Right ventricle myocardium superior (tissue), 1 donor: ENCODE measurements at regions of chr14 and their contacts with region 1.

Region 1: DNA sequence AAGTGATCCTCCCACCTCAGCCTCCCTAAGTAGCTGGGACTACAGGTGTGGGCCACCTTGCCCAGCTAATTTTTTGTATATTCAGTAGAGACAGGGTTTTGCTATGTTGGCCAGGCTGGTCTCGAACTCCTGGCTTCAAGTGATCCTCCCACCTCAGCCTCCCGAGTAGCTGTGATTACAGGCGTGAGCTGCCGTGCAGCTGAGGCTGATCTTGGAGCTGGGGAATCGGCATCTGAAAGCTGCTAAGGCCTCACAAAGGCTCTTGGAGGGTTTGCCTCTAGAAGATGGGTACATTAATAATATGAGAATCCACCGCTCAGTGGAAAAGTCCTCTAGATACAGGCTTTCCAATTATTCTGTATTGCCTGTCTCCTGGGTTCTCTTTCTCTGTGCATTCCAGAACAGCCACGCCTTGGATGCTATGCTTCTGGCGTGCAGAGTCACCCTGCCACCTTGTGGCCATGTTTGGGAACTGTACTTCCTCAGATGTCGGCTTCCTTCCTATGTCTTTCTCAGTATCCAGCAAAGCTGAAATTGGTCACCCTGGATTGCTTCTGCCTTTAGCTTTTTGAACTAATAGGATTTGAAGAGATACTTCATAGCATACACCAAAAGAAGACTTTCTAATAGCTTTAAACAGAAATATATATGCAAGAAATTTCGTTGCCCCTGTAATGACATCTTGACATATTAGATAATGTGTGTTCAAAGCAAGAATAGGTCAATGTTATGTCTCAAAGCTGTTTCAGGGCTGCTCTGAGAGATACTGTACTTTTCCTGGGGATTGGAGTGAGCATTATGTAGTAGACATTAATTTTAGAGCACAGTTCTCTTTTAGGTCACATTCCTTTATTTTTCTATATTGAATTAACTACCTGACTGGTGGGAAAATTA is 75.4 kb downstream of the SNAPC1 start:
- DNase-seq: peak; percentile 83
- ATAC-seq: peak; percentile 98

Region 2: GRCh38 chr14:61296719-61297502 is 540.7 kb before region 1 on chr14:
- intact Hi-C with region 1: loop called (anchors 10 kb)
- DNase-seq: no peak
- ATAC-seq: peak; percentile 56

Region 3: DNA sequence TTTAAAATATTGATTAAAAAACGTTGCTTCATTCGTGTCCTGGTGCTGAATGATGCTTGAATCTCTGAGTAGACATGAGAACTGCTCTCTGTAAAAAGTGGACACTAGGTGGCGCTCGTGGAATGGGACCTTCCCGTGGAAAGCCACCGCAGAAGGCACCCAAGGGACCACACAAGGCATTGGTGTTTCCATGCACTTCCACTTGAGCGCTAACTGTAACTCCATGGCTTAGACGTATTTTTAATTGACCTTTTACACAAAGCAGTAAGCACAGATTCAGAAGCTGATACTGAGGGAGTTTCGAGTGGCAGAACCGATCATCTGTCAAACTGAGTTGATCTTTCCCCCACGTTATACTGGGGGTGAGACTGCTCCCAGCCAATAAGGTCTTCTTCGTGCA is 380.9 kb before region 1 on chr14:
- intact Hi-C with region 1: loop called (anchors 2 kb)
- DNase-seq: peak; percentile 77
- ATAC-seq: peak; percentile 88